ENCODE measurements at regions of chr4 and their contacts with region 1.

Region 1: GRCh38 chr4:48085821-48086607 is 48.0 kb downstream of the TXK start:
- DNase-seq: no peak
- H3K4me3 Mint-ChIP-seq: no peak overlapping the region
- H3K27ac Mint-ChIP-seq: peak overlapping the region; percentile 24
- H3K4me1 Mint-ChIP-seq: peaks cover 1% of the 10 kb centered on the region
- H3K27me3 Mint-ChIP-seq: no peaks in the 10 kb centered on the region

Region 2: DNA sequence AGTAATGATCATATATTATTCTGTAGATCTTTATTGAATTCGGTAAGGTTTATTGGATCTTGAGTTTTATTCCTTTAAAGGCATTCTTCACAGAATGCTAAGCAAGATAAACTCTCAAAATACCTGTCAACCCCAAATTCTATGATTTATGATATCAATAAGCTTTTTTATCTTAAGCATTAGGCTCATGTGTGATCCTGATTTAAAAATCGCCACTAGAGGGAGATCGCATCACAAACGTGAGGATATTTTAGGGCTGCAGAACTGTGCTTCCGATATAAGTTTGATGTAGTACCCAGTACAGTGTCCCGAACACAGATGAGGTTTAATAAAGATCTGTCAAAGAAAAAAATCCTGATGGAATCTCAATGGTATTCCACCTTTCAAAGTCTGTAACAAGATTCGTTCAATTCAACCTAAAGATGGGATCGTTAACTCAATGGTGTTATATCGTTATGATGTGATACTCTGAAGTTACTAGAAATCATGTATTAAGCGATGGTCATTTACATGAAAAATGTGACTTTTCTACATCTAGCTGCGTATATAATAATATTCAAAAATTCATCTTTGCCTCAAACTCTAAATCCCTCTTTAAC is 417.1 kb before region 1 on chr4:
- intact Hi-C with region 1: loop called (anchors 5 kb)
- DNase-seq: peak; percentile 77
- H3K4me3 Mint-ChIP-seq: no peak overlapping the region
- H3K27ac Mint-ChIP-seq: no peak overlapping the region
- H3K4me1 Mint-ChIP-seq: no peaks in the 10 kb centered on the region
- H3K27me3 Mint-ChIP-seq: peaks cover 18% of the 10 kb centered on the region

Region 3: GRCh38 chr4:47891928-47892327 is 194.1 kb before region 1 on chr4:
- intact Hi-C with region 1: no loop called
- DNase-seq: no peak
- H3K4me3 Mint-ChIP-seq: no peak overlapping the region
- H3K27ac Mint-ChIP-seq: no peak overlapping the region
- H3K4me1 Mint-ChIP-seq: peaks cover 8% of the 10 kb centered on the region
- H3K27me3 Mint-ChIP-seq: no peaks in the 10 kb centered on the region

Region 4: GRCh38 chr4:47926639-47927258 is 159.3 kb before region 1 on chr4:
- intact Hi-C with region 1: loop called (anchors 2 kb)
- DNase-seq: peak; percentile 85
- H3K4me3 Mint-ChIP-seq: peak overlapping the region; percentile 63
- H3K27ac Mint-ChIP-seq: no peak overlapping the region
- H3K4me1 Mint-ChIP-seq: peaks cover 5% of the 10 kb centered on the region
- H3K27me3 Mint-ChIP-seq: peaks cover 35% of the 10 kb centered on the region

Region 5: GRCh38 chr4:48016141-48017103 is 69.6 kb before region 1 on chr4 and contains the starts of genes CNGA1 and NIPAL1:
- intact Hi-C with region 1: loop called (anchors 1 kb)
- DNase-seq: peak; percentile 91
- H3K4me3 Mint-ChIP-seq: peak within 1 kb of the TSS; percentile 80
- H3K27ac Mint-ChIP-seq: peak within 1 kb of the TSS; percentile 45
- H3K4me1 Mint-ChIP-seq: peaks cover 20% of the 10 kb centered on the region
- H3K27me3 Mint-ChIP-seq: peaks cover 30% of the 10 kb centered on the region
- total RNA-seq, gene CNGA1: not detected in 2 replicates
- total RNA-seq, gene NIPAL1: 3.6 and 3.8 TPM in 2 replicates

Region 6: GRCh38 chr4:48047421-48047844 is 38.6 kb before region 1 on chr4:
- intact Hi-C with region 1: loop called (anchors 5 kb)
- DNase-seq: peak; percentile 89
- H3K4me3 Mint-ChIP-seq: peak overlapping the region; percentile 38
- H3K27ac Mint-ChIP-seq: peak overlapping the region; percentile 61
- H3K4me1 Mint-ChIP-seq: peaks cover 39% of the 10 kb centered on the region
- H3K27me3 Mint-ChIP-seq: peaks cover 62% of the 10 kb centered on the region

Region 7: DNA sequence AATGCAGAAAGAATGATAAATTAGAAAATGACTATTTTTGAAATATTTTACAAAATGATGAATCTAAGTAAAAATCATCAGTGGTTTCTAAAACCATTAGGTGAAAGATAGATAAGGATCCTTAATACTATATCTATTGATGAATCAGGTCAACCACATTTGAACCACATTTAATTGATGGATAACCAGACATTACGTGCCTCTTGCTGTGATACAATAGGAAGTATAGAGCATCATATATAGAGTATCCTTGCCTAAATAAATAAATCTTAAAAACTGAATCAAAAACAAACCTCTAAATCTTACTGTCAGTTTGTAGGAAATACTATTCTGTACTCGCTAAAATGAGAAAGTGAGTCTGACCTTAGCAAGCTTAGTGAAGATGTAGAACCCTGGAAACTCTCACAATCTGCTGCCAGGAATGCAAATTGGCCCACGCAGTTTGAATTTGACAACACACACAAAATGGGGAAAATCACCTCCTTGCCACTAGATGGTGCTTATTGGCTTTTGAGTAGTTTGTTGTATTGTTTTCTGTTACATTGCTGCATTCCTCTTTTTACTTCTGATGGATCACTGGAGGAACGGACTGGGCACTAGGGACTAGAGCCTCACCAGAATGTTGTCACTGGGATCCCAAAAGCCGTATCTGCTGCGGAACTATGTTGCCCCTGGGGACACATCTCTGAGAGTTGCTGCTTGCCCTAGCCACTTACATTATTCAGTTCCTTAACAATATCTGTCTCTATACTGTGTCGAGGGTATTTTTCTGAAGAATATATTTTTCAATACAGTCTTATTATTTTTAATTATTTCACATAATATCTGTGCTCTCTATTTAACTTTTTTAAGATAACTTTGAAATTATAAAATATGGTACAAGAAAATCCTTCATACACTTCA is 230.0 kb after region 1 on chr4:
- intact Hi-C with region 1: no loop called
- DNase-seq: peak; percentile 78
- H3K4me3 Mint-ChIP-seq: no peak overlapping the region
- H3K27ac Mint-ChIP-seq: no peak overlapping the region
- H3K4me1 Mint-ChIP-seq: peaks cover 2% of the 10 kb centered on the region
- H3K27me3 Mint-ChIP-seq: peaks cover 2% of the 10 kb centered on the region

Region 8: GRCh38 chr4:48410812-48411211 is 324.8 kb after region 1 on chr4:
- intact Hi-C with region 1: no loop called
- DNase-seq: peak; percentile 19
- H3K4me3 Mint-ChIP-seq: no peak overlapping the region
- H3K27ac Mint-ChIP-seq: no peak overlapping the region
- H3K4me1 Mint-ChIP-seq: peaks cover 5% of the 10 kb centered on the region
- H3K27me3 Mint-ChIP-seq: no peaks in the 10 kb centered on the region

Region 9: GRCh38 chr4:48602222-48602621 is 516.2 kb after region 1 on chr4:
- intact Hi-C with region 1: no loop called
- DNase-seq: no peak
- H3K4me3 Mint-ChIP-seq: no peak overlapping the region
- H3K27ac Mint-ChIP-seq: no peak overlapping the region
- H3K4me1 Mint-ChIP-seq: peaks cover 2% of the 10 kb centered on the region
- H3K27me3 Mint-ChIP-seq: no peaks in the 10 kb centered on the region